ENCODE measurements at regions of chr2 and their contacts with region 1.

Region 1: GRCh38 chr2:226427538-226428307 is 371.9 kb downstream of the IRS1 start:
- DNase-seq: peak; percentile 16 to 59
- ATAC-seq: peak; percentile 98 to 99 (median 98)
- H3K4me3 ChIP-seq: no peak overlapping the region
- H3K27ac ChIP-seq: peak overlapping the region; percentile 85
- H3K4me1 ChIP-seq: peaks cover 28% of the 10 kb centered on the region
- H3K27me3 ChIP-seq: no peaks in the 10 kb centered on the region
- CTCF ChIP-seq: no peak

Region 2: GRCh38 chr2:226339633-226340032 is 88.1 kb before region 1 on chr2:
- intact Hi-C with region 1: no loop called
- DNase-seq: no peak
- ATAC-seq: no peak
- H3K4me3 ChIP-seq: no peak overlapping the region
- H3K27ac ChIP-seq: no peak overlapping the region
- H3K4me1 ChIP-seq: no peaks in the 10 kb centered on the region
- H3K27me3 ChIP-seq: no peaks in the 10 kb centered on the region
- CTCF ChIP-seq: no peak

Region 3: GRCh38 chr2:226354434-226354833 is 73.3 kb before region 1 on chr2:
- intact Hi-C with region 1: loop called in 1 of 2 experiments (anchors 5 kb)
- DNase-seq: no peak
- ATAC-seq: no peak
- H3K4me3 ChIP-seq: no peak overlapping the region
- H3K27ac ChIP-seq: peak overlapping the region; percentile 78
- H3K4me1 ChIP-seq: peaks cover 17% of the 10 kb centered on the region
- H3K27me3 ChIP-seq: no peaks in the 10 kb centered on the region
- CTCF ChIP-seq: no peak

Region 4: DNA sequence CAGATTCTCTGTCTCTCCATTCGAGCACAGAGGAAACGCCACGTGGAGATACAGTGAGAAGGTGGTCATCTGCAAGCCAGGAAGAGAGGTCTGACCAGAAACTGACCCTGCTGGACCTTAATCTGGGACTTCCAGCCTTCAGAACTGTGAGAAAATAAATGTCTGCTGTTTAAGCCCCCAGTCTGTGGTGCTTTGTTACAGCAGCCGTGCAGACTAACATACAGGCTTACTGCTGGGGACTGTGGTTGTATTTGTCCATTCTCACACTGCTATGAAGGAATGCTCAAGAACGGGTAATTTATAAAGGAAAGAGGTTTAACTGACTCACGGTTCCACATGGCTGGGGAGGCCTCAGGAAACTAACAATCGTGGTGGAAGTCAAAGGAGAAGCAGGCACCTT is 60.8 kb before region 1 on chr2:
- intact Hi-C with region 1: no loop called
- DNase-seq: no peak
- ATAC-seq: no peak
- H3K4me3 ChIP-seq: no peak overlapping the region
- H3K27ac ChIP-seq: no peak overlapping the region
- H3K4me1 ChIP-seq: no peaks in the 10 kb centered on the region
- H3K27me3 ChIP-seq: no peaks in the 10 kb centered on the region
- CTCF ChIP-seq: no peak

Region 5: DNA sequence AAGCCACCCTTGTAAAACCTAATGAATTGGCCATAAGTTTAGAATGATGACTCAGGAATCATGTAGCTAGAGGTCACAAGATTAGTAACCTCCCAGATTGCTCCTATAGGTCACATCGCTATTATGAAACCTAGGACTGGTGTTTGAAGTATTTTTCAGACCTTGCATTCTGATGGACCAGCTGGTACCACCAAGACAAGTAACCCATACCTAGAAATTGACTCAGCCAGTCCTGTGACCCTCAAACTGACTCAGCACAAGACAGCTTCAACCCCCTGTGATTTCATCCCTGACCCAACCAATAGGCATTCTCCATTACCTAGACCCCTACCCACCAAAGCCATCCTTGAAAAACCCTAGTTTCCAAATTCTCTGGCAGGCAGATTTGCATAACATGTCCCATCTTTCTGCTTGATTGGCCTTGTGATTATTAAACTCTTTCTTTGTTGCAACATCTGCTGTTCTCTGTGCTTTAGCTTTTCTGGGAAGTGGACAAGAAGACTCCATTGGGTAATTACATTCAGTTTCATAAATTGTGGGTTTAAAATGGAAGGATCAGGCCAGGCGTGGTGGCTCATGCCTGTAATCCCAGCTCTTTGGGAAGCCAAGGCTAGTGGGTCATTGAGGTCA is 117.0 kb after region 1 on chr2:
- intact Hi-C with region 1: no loop called
- DNase-seq: no peak
- ATAC-seq: no peak
- H3K4me3 ChIP-seq: no peak overlapping the region
- H3K27ac ChIP-seq: no peak overlapping the region
- H3K4me1 ChIP-seq: peaks cover 11% of the 10 kb centered on the region
- H3K27me3 ChIP-seq: no peaks in the 10 kb centered on the region
- CTCF ChIP-seq: no peak